H1 (cell line): ENCODE measurements at regions of chr10 and their contacts with region 1.

Region 1: GRCh38 chr10:79155301-79156081 is 86.7 kb downstream of the ZMIZ1 start:
- DNase-seq: no peak
- H3K4me3 ChIP-seq: no peak overlapping the region
- H3K27ac ChIP-seq: no peak overlapping the region
- H3K4me1 ChIP-seq: peaks cover 21 to 51% (median 39%) of the 10 kb centered on the region in 4 experiments
- H3K27me3 ChIP-seq: no peaks in the 10 kb centered on the region
- CTCF ChIP-seq: peak in 2 of 3 experiments; percentile 1 to 7; a peak in 1 of 4 replicates
- EP300 ChIP-seq: no peak
- POLR2A ChIP-seq: no peak
- RAD21 ChIP-seq: peak in 1 of 2 experiments; percentile 12; a peak in 1 of 4 replicates

Region 2: DNA sequence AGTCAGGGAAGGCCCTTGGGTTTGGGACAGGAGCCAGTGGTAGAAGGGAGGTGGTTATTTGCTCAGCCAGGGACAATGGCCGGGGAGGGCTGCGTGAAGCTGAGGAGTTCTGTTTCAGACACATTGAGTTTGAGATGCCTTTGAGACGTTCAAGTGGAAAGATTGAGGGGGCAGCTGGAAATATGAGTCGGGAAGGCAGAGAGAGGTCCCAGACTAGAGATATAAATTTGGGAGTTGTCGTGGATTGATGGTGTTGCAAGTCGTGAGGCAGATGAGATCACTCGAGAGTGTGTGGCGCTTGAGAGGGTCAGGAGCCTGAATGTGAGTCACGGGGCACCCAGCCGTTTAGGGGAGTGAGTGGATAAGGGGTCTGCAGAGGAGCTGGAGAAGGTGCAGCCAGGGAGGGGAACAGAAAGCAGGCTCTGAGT is 13.4 kb before region 1 on chr10:
- CTCF ChIA-PET with region 1: interaction called, 14 read pairs
- POLR2A ChIA-PET with region 1: interaction called, 10 read pairs
- DNase-seq: no peak
- H3K4me3 ChIP-seq: no peak overlapping the region
- H3K27ac ChIP-seq: no peak overlapping the region
- H3K4me1 ChIP-seq: peaks cover 0 to 39% (median 19%) of the 10 kb centered on the region in 4 experiments; a peak in 6 of 7 replicates
- H3K27me3 ChIP-seq: no peaks in the 10 kb centered on the region
- CTCF ChIP-seq: no peak
- EP300 ChIP-seq: no peak
- POLR2A ChIP-seq: no peak
- RAD21 ChIP-seq: no peak

Region 3: DNA sequence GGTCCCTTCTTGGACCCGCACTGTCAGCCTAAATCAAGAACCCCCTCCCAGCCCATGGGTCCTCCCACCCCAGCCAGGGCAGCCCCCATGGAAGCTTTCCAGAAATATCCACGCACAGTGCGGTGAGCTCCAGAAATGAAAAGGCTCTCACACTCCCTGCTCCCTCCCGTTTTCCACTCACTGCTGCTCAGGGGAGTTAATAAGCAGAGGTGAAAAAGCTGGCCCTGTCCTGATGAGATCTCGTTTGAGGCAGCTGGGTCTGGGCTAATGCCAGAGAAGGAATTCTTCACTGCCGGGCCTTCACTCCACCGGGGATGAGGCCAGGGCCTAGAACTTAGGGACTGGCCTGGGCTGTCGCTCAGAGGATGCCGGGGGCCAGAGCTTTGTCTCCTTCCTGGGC is 15.5 kb after region 1 on chr10:
- CTCF ChIA-PET with region 1: interaction called, 48 read pairs
- POLR2A ChIA-PET with region 1: interaction called, 13 read pairs
- DNase-seq: no peak
- H3K4me3 ChIP-seq: no peak overlapping the region
- H3K27ac ChIP-seq: no peak overlapping the region
- H3K4me1 ChIP-seq: peaks cover 0 to 17% (median 5%) of the 10 kb centered on the region in 4 experiments; a peak in 5 of 7 replicates
- H3K27me3 ChIP-seq: no peaks in the 10 kb centered on the region; a peak in 1 of 7 replicates
- CTCF ChIP-seq: no peak
- EP300 ChIP-seq: no peak
- POLR2A ChIP-seq: no peak
- RAD21 ChIP-seq: no peak

Region 4: DNA sequence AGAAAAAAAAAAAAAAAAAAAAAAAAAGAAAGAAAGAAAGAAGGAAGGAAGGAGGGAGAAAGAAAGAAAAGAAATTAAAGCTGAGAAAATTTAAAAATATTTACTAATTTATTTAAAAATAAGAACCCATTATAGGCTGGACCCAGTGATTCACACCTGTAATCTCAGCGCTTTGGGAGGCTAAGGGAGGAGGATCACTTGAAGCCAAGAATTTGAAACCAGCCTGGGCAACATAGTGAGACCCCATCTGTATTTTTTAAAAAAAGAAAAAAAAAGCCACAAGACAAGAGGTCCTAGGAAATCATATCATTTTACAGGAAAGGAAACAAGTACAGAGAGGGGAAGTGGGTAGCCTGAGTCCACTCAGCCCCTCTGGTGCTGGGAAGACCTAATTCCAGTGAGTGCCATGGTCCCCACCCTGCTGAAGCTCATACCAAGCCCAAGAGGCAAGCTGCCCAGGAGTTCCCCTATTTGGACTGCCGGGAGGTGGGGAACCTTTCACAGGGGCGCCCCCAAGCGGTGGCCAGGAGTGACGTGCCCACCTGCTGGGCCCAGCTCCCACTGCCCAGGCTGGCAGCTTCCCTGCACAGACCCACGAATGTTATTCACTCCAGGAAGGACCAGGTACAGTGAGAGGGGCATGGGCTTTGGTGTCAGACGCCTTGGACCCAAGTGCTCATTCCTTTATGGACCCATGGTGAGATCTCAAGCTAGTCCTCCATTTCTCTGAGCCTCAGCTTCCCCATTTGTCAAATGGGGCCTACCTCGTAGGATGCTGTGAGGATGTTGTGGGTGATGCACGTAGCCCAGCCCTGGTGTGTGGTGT is 46.9 kb after region 1 on chr10:
- CTCF ChIA-PET with region 1: interaction called, 396 read pairs
- POLR2A ChIA-PET with region 1: no interaction called
- DNase-seq: peak in 1 of 2 experiments; percentile 86
- H3K4me3 ChIP-seq: no peak overlapping the region
- H3K27ac ChIP-seq: no peak overlapping the region
- H3K4me1 ChIP-seq: no peaks in the 10 kb centered on the region
- H3K27me3 ChIP-seq: no peaks in the 10 kb centered on the region
- CTCF ChIP-seq: peak; percentile 62 to 83 (median 75)
- EP300 ChIP-seq: no peak
- POLR2A ChIP-seq: no peak
- RAD21 ChIP-seq: peak; percentile 65 to 76

Region 5: GRCh38 chr10:79242620-79243152 is 87.2 kb after region 1 on chr10:
- CTCF ChIA-PET with region 1: no interaction called
- POLR2A ChIA-PET with region 1: no interaction called
- DNase-seq: peak in 1 of 2 experiments; percentile 63
- H3K4me3 ChIP-seq: peak overlapping the region; percentile 42 to 75 (median 58)
- H3K27ac ChIP-seq: no peak overlapping the region
- H3K4me1 ChIP-seq: peaks cover 20 to 35% (median 27%) of the 10 kb centered on the region in 4 experiments
- H3K27me3 ChIP-seq: peaks cover 28 to 53% (median 50%) of the 10 kb centered on the region in 4 experiments
- CTCF ChIP-seq: no peak
- EP300 ChIP-seq: no peak
- POLR2A ChIP-seq: no peak
- RAD21 ChIP-seq: no peak